ENCODE measurements at regions of chr5 and their contacts with region 1.

Region 1: DNA sequence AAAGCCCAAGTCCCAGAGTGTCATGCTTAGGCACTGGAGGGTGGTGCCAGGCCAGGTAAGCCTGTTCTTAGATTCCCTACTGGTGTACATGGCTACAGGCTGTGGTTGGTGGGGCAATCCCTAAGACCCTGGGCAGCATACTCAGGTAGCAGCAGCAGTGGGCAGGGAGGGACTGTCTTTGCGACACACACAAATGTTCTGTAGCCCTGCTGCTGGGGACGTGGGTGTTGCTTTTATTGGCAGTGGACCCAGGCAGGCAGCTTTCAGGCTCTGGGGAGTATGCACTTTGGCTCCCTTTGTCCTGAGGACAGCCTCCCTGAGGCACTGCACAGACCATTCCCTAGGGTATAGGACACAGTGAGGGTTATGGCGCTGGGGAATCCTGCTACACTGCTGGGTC is 137.1 kb upstream of the ADAMTS19 start:
- DNase-seq: no peak
- H3K4me3 ChIP-seq: no peak overlapping the region
- H3K27ac ChIP-seq: no peak overlapping the region
- H3K4me1 ChIP-seq: no peaks in the 10 kb centered on the region
- H3K27me3 ChIP-seq: no peaks in the 10 kb centered on the region
- CTCF ChIP-seq: no peak
- POLR2A ChIP-seq: no peak

Region 2: GRCh38 chr5:129244478-129244877 is 78.5 kb before region 1 on chr5:
- CTCF ChIA-PET with region 1: no interaction called
- POLR2A ChIA-PET with region 1: no interaction called
- dilution Hi-C with region 1: no loop called
- intact Hi-C with region 1: no loop called
- DNase-seq: peak; percentile 3
- H3K4me3 ChIP-seq: no peak overlapping the region
- H3K27ac ChIP-seq: no peak overlapping the region
- H3K4me1 ChIP-seq: no peaks in the 10 kb centered on the region
- H3K27me3 ChIP-seq: no peaks in the 10 kb centered on the region
- CTCF ChIP-seq: no peak
- POLR2A ChIP-seq: no peak

Region 3: GRCh38 chr5:129458651-129459050 is 135.7 kb after region 1 on chr5:
- CTCF ChIA-PET with region 1: no interaction called
- POLR2A ChIA-PET with region 1: no interaction called
- dilution Hi-C with region 1: no loop called
- intact Hi-C with region 1: no loop called
- DNase-seq: no peak
- H3K4me3 ChIP-seq: no peak overlapping the region
- H3K27ac ChIP-seq: no peak overlapping the region
- H3K4me1 ChIP-seq: peaks cover 10% of the 10 kb centered on the region
- H3K27me3 ChIP-seq: peaks cover 29 to 47% of the 10 kb centered on the region in 2 experiments
- CTCF ChIP-seq: no peak
- POLR2A ChIP-seq: no peak

Region 4: DNA sequence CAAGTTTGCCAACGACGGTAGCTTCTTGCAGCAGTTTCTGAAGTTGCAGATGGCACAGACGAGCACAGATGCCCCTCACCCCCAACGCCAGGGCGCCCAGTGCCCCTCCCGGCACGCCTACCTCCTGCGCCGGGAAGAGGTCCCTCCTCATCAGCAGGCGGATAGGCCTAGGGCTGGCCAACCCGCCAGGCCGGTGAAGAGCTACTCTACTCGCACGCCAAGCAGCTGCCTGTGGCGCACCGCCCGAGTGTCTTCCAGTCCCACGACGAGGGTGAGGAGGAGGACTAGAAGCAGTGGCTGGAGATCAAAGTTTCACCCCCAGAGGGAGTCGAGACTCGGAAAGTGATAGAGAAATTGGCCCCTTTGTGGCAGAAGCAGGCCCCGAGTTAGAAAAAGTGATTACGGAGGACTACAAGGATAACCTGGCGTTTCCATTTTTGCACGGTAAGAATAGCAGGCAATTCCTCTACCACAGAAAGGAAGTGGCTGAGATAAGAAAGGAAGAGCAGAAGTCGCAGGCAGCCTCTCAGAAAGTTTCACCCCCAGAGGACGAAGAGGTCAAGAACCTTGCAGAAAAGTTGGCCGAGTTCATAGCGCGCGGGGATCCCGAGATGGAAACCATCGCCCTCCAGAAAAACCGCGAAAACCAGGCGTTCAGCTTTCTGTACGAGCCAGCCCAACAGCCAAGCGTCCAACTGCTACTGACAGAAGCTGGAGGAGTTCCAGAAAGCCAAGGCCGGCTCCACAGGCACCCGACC is 1671.7 kb after region 1 on chr5:
- CTCF ChIA-PET with region 1: no interaction called
- POLR2A ChIA-PET with region 1: no interaction called
- dilution Hi-C with region 1: no loop called
- intact Hi-C with region 1: loop called (anchors 5 kb)
- DNase-seq: no peak
- H3K4me3 ChIP-seq: no peak overlapping the region
- H3K27ac ChIP-seq: no peak overlapping the region
- H3K4me1 ChIP-seq: no peaks in the 10 kb centered on the region
- H3K27me3 ChIP-seq: no peaks in the 10 kb centered on the region
- CTCF ChIP-seq: no peak
- POLR2A ChIP-seq: no peak

Measured in endothelial cell of umbilical vein (primary cell).